Heart right ventricle (tissue), 16 donors: ENCODE measurements at regions of chr19 and their contacts with region 1.

Region 1: GRCh38 chr19:40139533-40140287 is 49.0 kb upstream of the ZNF780A start:
- DNase-seq: no peak
- ATAC-seq: peak in 1 of 8 donors; percentile 39
- H3K4me3 ChIP-seq: no peak overlapping the region
- H3K27ac ChIP-seq: no peak overlapping the region
- H3K4me1 ChIP-seq: peaks cover 0 to 26% (median 16%) of the 10 kb centered on the region in 9 donors
- H3K27me3 ChIP-seq: peaks cover 0 to 19% (median 16%) of the 10 kb centered on the region in 7 donors
- CTCF ChIP-seq: peak; percentile 36 to 82 (median 72)

Region 2: GRCh38 chr19:40221858-40222837 is 82.4 kb after region 1 on chr19:
- intact Hi-C with region 1: loop called (anchors 1 to 5 kb)
- DNase-seq: peak; percentile 58 to 92
- ATAC-seq: peak; percentile 69 to 91 (median 88)
- H3K4me3 ChIP-seq: no peak overlapping the region
- H3K27ac ChIP-seq: no peak overlapping the region
- H3K4me1 ChIP-seq: peaks cover 10 to 31% (median 18%) of the 10 kb centered on the region in 9 donors
- H3K27me3 ChIP-seq: peaks cover 10 to 92% (median 65%) of the 10 kb centered on the region in 7 donors
- CTCF ChIP-seq: peak; percentile 86 to 95 (median 89)